MCF 10A (cell line): ENCODE measurements at regions of chr11 and their contacts with region 1.

Region 1: GRCh38 chr11:12411806-12412727 is 34.7 kb downstream of the PARVA start:
- DNase-seq: peak; percentile 68
- H3K4me3 Mint-ChIP-seq: no peak overlapping the region
- H3K27ac Mint-ChIP-seq: peak overlapping the region; percentile 63
- H3K4me1 Mint-ChIP-seq: peaks cover 17% of the 10 kb centered on the region
- H3K27me3 Mint-ChIP-seq: no peaks in the 10 kb centered on the region
- CTCF ChIP-seq: peak; percentile 57

Region 2: GRCh38 chr11:12318791-12319438 is 93.2 kb before region 1 on chr11:
- CTCF ChIA-PET with region 1: no interaction called
- POLR2A ChIA-PET with region 1: no interaction called
- intact Hi-C with region 1: no loop called
- DNase-seq: no peak
- H3K4me3 Mint-ChIP-seq: no peak overlapping the region
- H3K27ac Mint-ChIP-seq: no peak overlapping the region
- H3K4me1 Mint-ChIP-seq: no peaks in the 10 kb centered on the region
- H3K27me3 Mint-ChIP-seq: no peaks in the 10 kb centered on the region
- CTCF ChIP-seq: no peak

Region 3: GRCh38 chr11:12485328-12485727 is 73.3 kb after region 1 on chr11:
- CTCF ChIA-PET with region 1: interaction called, 5 read pairs
- POLR2A ChIA-PET with region 1: no interaction called
- intact Hi-C with region 1: loop called (anchors 1 kb)
- DNase-seq: peak; percentile 16
- H3K4me3 Mint-ChIP-seq: no peak overlapping the region
- H3K27ac Mint-ChIP-seq: no peak overlapping the region
- H3K4me1 Mint-ChIP-seq: no peaks in the 10 kb centered on the region
- H3K27me3 Mint-ChIP-seq: no peaks in the 10 kb centered on the region
- CTCF ChIP-seq: peak; percentile 26

Region 4: GRCh38 chr11:12618743-12619540 is 206.9 kb after region 1 on chr11:
- CTCF ChIA-PET with region 1: no interaction called
- POLR2A ChIA-PET with region 1: no interaction called
- intact Hi-C with region 1: no loop called
- DNase-seq: no peak
- H3K4me3 Mint-ChIP-seq: no peak overlapping the region
- H3K27ac Mint-ChIP-seq: no peak overlapping the region
- H3K4me1 Mint-ChIP-seq: no peaks in the 10 kb centered on the region
- H3K27me3 Mint-ChIP-seq: no peaks in the 10 kb centered on the region
- CTCF ChIP-seq: no peak

Region 5: GRCh38 chr11:12893787-12894672 is 482.0 kb after region 1 on chr11:
- CTCF ChIA-PET with region 1: interaction called, 9 read pairs
- POLR2A ChIA-PET with region 1: no interaction called
- intact Hi-C with region 1: loop called (anchors 1 kb)
- DNase-seq: peak; percentile 55
- H3K4me3 Mint-ChIP-seq: no peak overlapping the region
- H3K27ac Mint-ChIP-seq: peak overlapping the region; percentile 85
- H3K4me1 Mint-ChIP-seq: peaks cover 12% of the 10 kb centered on the region
- H3K27me3 Mint-ChIP-seq: no peaks in the 10 kb centered on the region
- CTCF ChIP-seq: peak; percentile 73